ENCODE measurements at regions of chr11 and their contacts with region 1.

Region 1: DNA sequence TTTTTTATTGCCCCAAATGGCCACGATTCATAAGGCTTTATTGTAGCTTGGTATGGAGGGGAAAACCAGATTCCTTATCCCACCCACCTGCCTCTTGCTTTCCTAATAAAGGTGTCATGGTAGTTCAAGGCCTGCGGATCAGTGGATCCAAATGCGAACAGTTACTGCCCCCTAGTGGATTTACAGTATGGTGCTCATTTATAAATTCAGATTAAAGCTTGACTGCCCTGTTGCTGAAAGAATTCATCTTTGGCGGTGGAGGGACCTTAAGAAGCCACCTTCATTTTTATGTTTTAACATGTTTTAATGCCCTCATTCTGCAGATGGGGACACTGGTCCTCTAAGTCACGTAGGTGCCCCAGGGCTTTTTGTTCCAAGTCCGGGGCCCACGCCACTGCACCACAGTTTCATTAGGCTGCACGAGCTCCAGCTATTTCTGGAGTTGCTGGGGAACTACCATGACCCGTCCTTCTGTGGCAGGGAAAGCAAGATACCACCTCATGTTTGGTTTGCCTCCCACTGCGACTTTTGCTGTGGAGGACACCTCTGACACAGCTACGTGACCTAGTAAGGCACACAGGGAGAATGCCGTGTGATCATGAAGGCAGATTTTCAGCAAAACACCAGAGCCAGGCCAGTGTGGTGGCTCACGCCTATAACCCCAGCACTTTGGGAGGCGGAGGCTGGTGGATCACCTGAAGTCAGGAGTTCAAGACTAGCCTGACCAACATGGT is 15.6 kb upstream of the INCENP start:
- DNase-seq: peak in 8 of 14 experiments; percentile 19 to 82 (median 42)
- ATAC-seq: peak; percentile 62
- H3K4me3 ChIP-seq: no peak overlapping the region
- H3K4me3 Mint-ChIP-seq: peak overlapping the region; percentile 52
- H3K27ac ChIP-seq: no peak overlapping the region
- H3K27ac Mint-ChIP-seq: no peak overlapping the region
- H3K4me1 ChIP-seq: peaks cover 26% of the 10 kb centered on the region
- H3K4me1 Mint-ChIP-seq: peaks cover 11% of the 10 kb centered on the region
- H3K27me3 ChIP-seq: no peaks in the 10 kb centered on the region
- H3K27me3 Mint-ChIP-seq: no peaks in the 10 kb centered on the region
- CTCF ChIP-seq: peak; percentile 85

Region 2: DNA sequence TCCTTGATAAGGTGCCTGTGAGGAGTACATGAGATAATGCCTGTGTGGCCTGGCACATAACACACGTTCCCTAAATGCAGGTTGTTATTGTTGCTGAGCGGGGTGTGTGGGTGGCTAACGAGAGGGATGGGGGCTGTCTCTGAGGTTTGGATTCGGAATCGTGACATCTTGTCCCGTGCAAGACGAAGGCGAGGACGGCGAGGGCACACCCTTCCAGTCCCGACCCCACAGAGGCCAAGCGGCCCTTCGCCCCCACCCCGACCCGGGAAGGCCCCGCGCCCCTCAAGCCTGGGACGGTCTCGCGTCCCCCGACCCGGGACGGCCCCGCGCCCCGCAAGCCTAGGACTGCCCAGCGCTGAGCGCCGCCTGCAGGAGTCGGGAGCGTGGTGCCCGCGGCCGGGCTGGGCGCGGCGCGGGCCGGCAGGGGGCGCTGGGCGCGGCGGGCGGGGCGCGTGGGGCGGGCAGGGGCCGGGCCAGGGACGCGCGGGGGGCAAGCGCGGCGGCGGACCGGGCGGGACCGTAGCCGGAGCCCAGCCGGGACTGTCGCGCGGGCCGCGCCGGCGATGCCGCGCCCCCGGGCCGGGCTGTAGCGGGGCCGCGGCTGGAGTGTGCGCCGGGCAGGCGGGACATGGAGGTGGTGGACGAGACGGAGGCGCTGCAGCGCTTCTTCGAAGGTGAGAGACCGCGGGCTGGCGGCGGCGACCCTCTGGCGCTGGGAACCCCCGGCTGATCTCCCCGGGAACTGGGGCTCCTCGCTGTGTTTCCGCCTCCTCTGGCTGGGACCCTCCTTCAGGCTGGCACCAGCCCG is 355.9 kb before region 1 on chr11 and contains the start of gene MYRF:
- CTCF ChIA-PET with region 1: no interaction called
- POLR2A ChIA-PET with region 1: no interaction called
- intact Hi-C with region 1: loop called in 1 of 2 experiments (anchors 2 kb)
- DNase-seq: peak; percentile 23 to 79 (median 53)
- ATAC-seq: peak; percentile 93
- H3K4me3 ChIP-seq: peak within 1 kb of the TSS; percentile 49
- H3K4me3 Mint-ChIP-seq: peak within 1 kb of the TSS; percentile 69
- H3K27ac ChIP-seq: no peak within 1 kb of the TSS
- H3K27ac Mint-ChIP-seq: no peak within 1 kb of the TSS
- H3K4me1 ChIP-seq: peaks cover 29% of the 10 kb centered on the region
- H3K4me1 Mint-ChIP-seq: peaks cover 10% of the 10 kb centered on the region
- H3K27me3 ChIP-seq: peaks cover 20 to 24% of the 10 kb centered on the region in 2 experiments
- H3K27me3 Mint-ChIP-seq: peaks cover 41% of the 10 kb centered on the region
- CTCF ChIP-seq: no peak
- total RNA-seq, gene MYRF: 0.31 to 0.49 TPM

Region 3: DNA sequence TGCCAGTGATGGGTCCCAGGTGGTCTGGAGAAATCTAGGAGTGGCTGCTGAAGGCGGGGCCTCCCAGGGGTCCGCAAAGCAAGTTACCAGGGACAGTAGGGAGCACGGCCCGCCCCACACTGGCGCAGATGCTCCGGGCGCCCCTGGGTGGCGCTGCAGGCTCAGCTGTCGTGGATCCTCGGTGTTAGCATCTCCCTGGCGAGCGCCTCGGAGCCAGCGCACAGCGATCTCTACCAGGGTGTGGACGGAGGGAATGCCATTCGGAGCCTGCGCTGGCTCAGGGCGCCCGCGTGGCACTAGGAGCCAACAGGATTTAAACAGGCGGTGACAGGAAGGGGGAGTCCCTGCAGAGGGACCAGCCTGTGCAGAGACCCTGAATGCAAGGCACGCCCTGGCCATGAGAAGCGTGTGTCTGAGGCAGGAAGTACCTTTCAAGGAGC is 237.0 kb before region 1 on chr11:
- CTCF ChIA-PET with region 1: interaction called, 36 read pairs
- POLR2A ChIA-PET with region 1: no interaction called
- intact Hi-C with region 1: loop called in 1 of 2 experiments (anchors 1 kb)
- DNase-seq: peak; percentile 38 to 79 (median 50)
- ATAC-seq: peak; percentile 97
- H3K4me3 ChIP-seq: no peak overlapping the region
- H3K4me3 Mint-ChIP-seq: peak overlapping the region; percentile 13
- H3K27ac ChIP-seq: no peak overlapping the region
- H3K27ac Mint-ChIP-seq: no peak overlapping the region
- H3K4me1 ChIP-seq: peaks cover 7% of the 10 kb centered on the region
- H3K4me1 Mint-ChIP-seq: peaks cover 5% of the 10 kb centered on the region
- H3K27me3 ChIP-seq: no peaks in the 10 kb centered on the region
- H3K27me3 Mint-ChIP-seq: peaks cover 7% of the 10 kb centered on the region
- CTCF ChIP-seq: peak; percentile 57

Region 4: DNA sequence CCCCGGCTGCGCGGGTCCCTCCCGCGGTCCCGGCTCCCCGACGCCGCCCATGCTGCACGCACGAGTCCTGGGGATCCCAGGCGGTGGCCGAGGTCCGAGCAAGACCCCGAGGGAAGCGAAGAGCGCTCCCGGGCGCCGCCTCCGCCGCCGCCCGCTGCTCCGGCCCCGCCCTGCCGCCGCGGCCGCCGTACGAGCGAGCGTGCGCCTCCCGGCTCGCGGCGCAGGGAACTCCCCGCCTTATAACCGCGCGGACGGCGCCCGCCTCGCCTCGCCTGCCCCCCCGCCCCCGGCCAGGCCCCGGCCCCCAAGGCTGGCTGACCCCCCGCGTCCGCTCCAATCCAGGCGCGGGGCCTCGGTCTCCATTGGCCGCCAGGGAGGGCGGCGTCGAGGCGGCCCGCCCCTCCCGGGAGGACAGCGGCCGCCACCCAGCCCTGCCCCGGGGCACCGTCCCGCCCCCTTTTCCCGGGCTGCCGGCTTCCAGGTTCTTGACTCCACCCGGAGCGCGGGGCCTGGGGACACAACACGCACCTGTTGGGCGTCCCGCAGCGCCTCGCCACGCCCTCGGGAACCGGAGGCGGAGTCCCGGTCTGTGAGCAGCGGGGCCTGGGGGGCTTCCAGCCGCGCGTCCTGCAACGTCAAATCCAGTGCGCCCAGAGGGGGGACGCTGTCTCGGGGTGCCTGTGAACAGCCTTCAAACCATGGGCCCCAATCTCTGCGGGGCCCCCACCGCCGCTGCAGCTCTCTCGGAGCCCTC is 216.7 kb before region 1 on chr11 and contains the start of gene FADS3:
- CTCF ChIA-PET with region 1: interaction called, 132 read pairs
- POLR2A ChIA-PET with region 1: no interaction called
- intact Hi-C with region 1: no loop called
- DNase-seq: peak; percentile 18 to 86 (median 52)
- ATAC-seq: peak; percentile 61
- H3K4me3 ChIP-seq: peak within 1 kb of the TSS; percentile 72
- H3K4me3 Mint-ChIP-seq: peak within 1 kb of the TSS; percentile 87
- H3K27ac ChIP-seq: peak within 1 kb of the TSS in 1 of 2 donors; percentile 21
- H3K27ac Mint-ChIP-seq: no peak within 1 kb of the TSS
- H3K4me1 ChIP-seq: peaks cover 22% of the 10 kb centered on the region
- H3K4me1 Mint-ChIP-seq: peaks cover 9% of the 10 kb centered on the region
- H3K27me3 ChIP-seq: peaks cover 0 to 3% of the 10 kb centered on the region in 2 experiments
- H3K27me3 Mint-ChIP-seq: no peaks in the 10 kb centered on the region
- CTCF ChIP-seq: no peak
- total RNA-seq, gene FADS3: 6.9 TPM

Region 5: DNA sequence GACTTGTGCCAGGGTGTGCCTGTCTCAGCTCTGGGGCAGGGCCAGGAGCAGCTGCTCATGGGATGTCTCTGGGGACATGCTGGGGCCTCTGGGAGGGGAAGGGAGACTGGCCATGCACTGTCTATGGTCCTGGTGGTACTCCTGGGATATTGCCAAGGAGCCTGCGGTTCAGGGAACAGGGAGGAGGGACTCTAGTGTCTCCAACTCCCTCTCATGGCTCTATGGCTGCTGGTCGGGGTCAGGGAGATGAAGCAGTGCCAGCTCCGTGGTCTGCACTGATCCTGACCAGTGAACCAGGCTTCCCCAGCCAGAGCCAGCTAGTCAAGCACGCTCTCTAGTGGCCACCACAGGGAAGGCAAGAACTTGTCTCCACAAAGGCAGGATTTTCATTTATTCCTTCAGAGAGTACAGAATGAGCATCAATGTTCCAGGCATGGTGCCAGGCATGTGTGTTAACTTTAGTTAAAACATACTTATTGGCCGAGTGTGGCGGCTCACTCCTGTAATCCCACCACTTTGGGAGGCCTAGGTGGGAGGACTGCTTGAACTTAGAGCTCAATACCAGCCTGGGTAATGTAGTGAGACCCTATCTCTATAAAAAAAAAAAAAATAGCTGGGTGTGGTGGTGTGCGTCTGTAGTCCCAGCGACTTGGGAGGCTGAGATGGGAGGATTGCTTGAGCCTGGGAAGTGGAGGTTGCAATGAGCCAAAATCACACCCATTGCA is 160.5 kb before region 1 on chr11:
- CTCF ChIA-PET with region 1: interaction called, 20 read pairs
- POLR2A ChIA-PET with region 1: interaction called, 3 read pairs
- intact Hi-C with region 1: no loop called
- DNase-seq: peak; percentile 42 to 81 (median 58)
- ATAC-seq: peak; percentile 87
- H3K4me3 ChIP-seq: no peak overlapping the region
- H3K4me3 Mint-ChIP-seq: no peak overlapping the region
- H3K27ac ChIP-seq: no peak overlapping the region
- H3K27ac Mint-ChIP-seq: no peak overlapping the region
- H3K4me1 ChIP-seq: peaks cover 8% of the 10 kb centered on the region
- H3K4me1 Mint-ChIP-seq: no peaks in the 10 kb centered on the region
- H3K27me3 ChIP-seq: peaks cover 0 to 3% of the 10 kb centered on the region in 2 experiments
- H3K27me3 Mint-ChIP-seq: peaks cover 16% of the 10 kb centered on the region
- CTCF ChIP-seq: peak; percentile 70

Region 6: GRCh38 chr11:62217191-62217748 is 109.1 kb after region 1 on chr11:
- CTCF ChIA-PET with region 1: no interaction called
- POLR2A ChIA-PET with region 1: no interaction called
- intact Hi-C with region 1: no loop called
- DNase-seq: peak in 2 of 14 experiments; percentile 3 to 11
- ATAC-seq: no peak
- H3K4me3 ChIP-seq: no peak overlapping the region
- H3K4me3 Mint-ChIP-seq: no peak overlapping the region
- H3K27ac ChIP-seq: no peak overlapping the region
- H3K27ac Mint-ChIP-seq: no peak overlapping the region
- H3K4me1 ChIP-seq: no peaks in the 10 kb centered on the region
- H3K4me1 Mint-ChIP-seq: no peaks in the 10 kb centered on the region
- H3K27me3 ChIP-seq: peaks cover 0 to 4% of the 10 kb centered on the region in 2 experiments
- H3K27me3 Mint-ChIP-seq: peaks cover 25% of the 10 kb centered on the region
- CTCF ChIP-seq: no peak

Region 7: GRCh38 chr11:62315431-62315830 is 207.2 kb after region 1 on chr11:
- CTCF ChIA-PET with region 1: no interaction called
- POLR2A ChIA-PET with region 1: no interaction called
- intact Hi-C with region 1: no loop called
- DNase-seq: peak in 2 of 14 experiments; percentile 17 to 24
- ATAC-seq: no peak
- H3K4me3 ChIP-seq: no peak overlapping the region
- H3K4me3 Mint-ChIP-seq: no peak overlapping the region
- H3K27ac ChIP-seq: no peak overlapping the region
- H3K27ac Mint-ChIP-seq: no peak overlapping the region
- H3K4me1 ChIP-seq: peaks cover 14% of the 10 kb centered on the region
- H3K4me1 Mint-ChIP-seq: peaks cover 15% of the 10 kb centered on the region
- H3K27me3 ChIP-seq: peaks cover 5 to 20% of the 10 kb centered on the region in 2 experiments
- H3K27me3 Mint-ChIP-seq: peaks cover 69% of the 10 kb centered on the region
- CTCF ChIP-seq: no peak

Measured in CD4-positive, alpha-beta T cell (primary cell).